ENCODE measurements at regions of chrX and their contacts with region 1.

Region 1: DNA sequence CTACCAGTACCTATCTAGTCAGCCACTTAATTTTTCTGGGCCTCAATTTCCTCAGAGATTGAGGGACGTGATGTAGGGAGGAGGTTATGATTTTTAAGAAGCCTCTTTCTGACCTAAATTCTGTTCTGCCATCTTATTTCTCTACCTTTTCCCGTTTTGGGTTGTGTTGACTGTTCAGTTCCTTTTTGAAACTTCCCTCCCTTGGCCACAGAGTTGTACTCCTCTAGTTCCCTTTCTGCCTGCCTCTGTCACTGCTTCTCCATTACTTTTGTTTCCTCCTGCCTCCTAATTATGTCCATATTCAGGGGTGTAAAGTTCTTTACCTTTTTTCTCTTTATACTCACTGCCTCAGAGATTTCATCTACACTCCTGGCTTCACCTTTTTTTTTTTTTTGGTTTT is 25.4 kb downstream of the CLCN5 start:
- DNase-seq: no peak
- ATAC-seq: no peak
- H3K4me3 ChIP-seq: no peak overlapping the region
- H3K27ac ChIP-seq: no peak overlapping the region
- H3K4me1 ChIP-seq: no peaks in the 10 kb centered on the region
- H3K27me3 ChIP-seq: no peaks in the 10 kb centered on the region
- CTCF ChIP-seq: no peak
- POLR2A ChIP-seq: no peak

Region 2: GRCh38 chrX:50001751-50002714 is 54.3 kb after region 1 on chrX:
- intact Hi-C with region 1: loop called in 1 of 10 experiments (anchors 10 kb)
- DNase-seq: no peak
- ATAC-seq: no peak
- H3K4me3 ChIP-seq: no peak overlapping the region
- H3K27ac ChIP-seq: no peak overlapping the region
- H3K4me1 ChIP-seq: peaks cover 0 to 3% (median 0%) of the 10 kb centered on the region in 12 donors
- H3K27me3 ChIP-seq: peaks cover 0 to 7% (median 0%) of the 10 kb centered on the region in 9 donors
- CTCF ChIP-seq: no peak
- POLR2A ChIP-seq: no peak